ENCODE measurements at regions of chr6 and their contacts with region 1.

Region 1: DNA sequence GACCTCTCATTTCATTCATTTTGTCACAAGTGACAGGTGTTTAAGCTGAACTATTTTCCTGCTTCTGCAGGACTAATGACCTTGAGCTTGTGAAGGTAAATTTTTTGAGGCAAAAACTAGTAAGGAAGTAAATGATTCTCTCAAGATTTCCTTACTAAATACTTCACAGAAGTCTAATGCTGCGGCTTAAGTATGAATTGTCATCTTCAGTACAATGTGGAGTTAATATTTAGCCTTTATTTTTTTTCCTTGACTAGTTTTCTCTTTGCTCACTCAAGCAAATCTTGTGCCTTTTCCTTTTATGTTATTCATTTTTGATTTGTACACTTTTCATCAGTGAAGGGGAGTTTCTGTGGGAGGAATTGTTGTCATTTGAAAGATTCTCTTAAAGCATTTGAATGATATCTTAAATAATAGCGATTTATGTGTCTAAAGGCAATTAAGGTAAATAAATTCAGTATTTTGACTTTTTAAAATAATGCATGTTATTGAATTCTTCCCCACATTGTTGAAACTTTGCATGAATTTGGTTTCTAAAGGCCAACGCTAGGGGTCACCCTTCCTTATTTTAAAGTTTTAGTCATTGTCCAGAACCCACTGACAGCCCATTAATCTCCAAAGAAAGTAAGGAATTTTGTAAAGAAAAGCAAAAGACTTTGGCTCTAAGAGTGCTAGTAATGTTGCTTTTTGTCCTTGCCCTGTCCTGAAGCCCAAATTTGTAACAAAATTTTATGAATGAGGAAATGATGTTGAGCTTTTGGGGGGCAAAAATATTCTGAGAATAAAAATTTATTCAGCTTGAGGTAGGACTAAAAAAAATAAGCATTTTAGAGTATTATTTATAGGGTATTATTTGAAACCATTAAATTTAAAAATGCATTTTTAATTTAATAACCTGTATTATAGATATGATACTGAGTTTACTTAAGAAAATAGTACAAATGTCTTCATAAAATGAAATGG is 157.4 kb upstream of the LAMA2 start:
- DNase-seq: peak; percentile 65
- H3K4me3 Mint-ChIP-seq: no peak overlapping the region
- H3K27ac Mint-ChIP-seq: no peak overlapping the region
- H3K4me1 Mint-ChIP-seq: no peaks in the 10 kb centered on the region
- H3K27me3 Mint-ChIP-seq: peaks cover 11% of the 10 kb centered on the region

Region 2: GRCh38 chr6:128520436-128521281 is 204.9 kb before region 1 on chr6 and contains the start of gene PTPRK:
- intact Hi-C with region 1: loop called (anchors 5 kb)
- DNase-seq: peak; percentile 96
- H3K4me3 Mint-ChIP-seq: peak within 1 kb of the TSS; percentile 96
- H3K27ac Mint-ChIP-seq: peak within 1 kb of the TSS; percentile 84
- H3K4me1 Mint-ChIP-seq: peaks cover 19% of the 10 kb centered on the region
- H3K27me3 Mint-ChIP-seq: peaks cover 75% of the 10 kb centered on the region
- total RNA-seq, gene PTPRK: 3.6 and 5.4 TPM in 2 replicates

Region 3: GRCh38 chr6:128694303-128695009 is 31.1 kb before region 1 on chr6:
- intact Hi-C with region 1: no loop called
- DNase-seq: no peak
- H3K4me3 Mint-ChIP-seq: no peak overlapping the region
- H3K27ac Mint-ChIP-seq: no peak overlapping the region
- H3K4me1 Mint-ChIP-seq: no peaks in the 10 kb centered on the region
- H3K27me3 Mint-ChIP-seq: no peaks in the 10 kb centered on the region

Region 4: DNA sequence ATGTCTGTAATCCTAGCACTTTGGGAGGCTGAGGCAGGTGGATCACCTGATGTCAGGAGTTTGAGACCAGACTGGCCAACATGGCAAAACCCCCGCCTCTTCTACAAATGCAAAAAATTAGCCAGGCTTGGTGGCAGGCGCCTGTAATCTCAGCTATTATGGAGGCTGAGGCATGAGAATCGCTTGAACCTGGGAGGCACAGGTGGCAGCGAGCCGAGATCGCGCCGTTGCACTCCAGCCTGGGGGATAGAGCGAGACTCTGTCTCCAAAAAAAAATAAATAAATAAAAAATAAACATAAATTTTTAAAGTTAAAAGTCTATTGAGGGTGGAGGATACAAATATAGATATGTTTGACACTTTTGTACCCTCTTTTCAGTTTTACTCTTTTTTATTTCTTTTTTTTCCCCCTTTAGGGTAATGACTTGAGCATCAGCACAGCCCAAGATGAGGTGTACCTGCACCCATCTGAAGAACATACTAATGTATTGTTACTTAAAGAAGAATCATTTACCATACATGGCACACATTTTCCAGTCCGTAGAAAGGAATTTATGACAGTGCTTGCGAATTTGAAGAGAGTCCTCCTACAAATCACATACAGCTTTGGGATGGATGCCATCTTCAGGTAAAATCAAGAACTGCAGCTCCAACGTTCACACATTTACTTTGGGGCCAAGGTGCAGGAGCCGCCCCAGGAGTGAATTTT is 526.3 kb after region 1 on chr6:
- intact Hi-C with region 1: loop called (anchors 2 kb)
- DNase-seq: peak; percentile 85
- H3K4me3 Mint-ChIP-seq: no peak overlapping the region
- H3K27ac Mint-ChIP-seq: no peak overlapping the region
- H3K4me1 Mint-ChIP-seq: peaks cover 10% of the 10 kb centered on the region
- H3K27me3 Mint-ChIP-seq: peaks cover 25% of the 10 kb centered on the region

Region 5: GRCh38 chr6:129567374-129567773 is 841.8 kb after region 1 on chr6:
- intact Hi-C with region 1: loop called (anchors 10 kb)
- DNase-seq: peak; percentile 77
- H3K4me3 Mint-ChIP-seq: no peak overlapping the region
- H3K27ac Mint-ChIP-seq: no peak overlapping the region
- H3K4me1 Mint-ChIP-seq: no peaks in the 10 kb centered on the region
- H3K27me3 Mint-ChIP-seq: peaks cover 6% of the 10 kb centered on the region

Measured in activated CD4-positive, alpha-beta T cell treated with anti-CD3 and anti-CD28 coated beads, Interleukin-2, amount 10 ng/mL, durations not matched to agents 24 days and 14 days (primary cell).